Activated T-helper 2 cell treated with anti-CD3 and anti-CD28 coated beads, Interferon-gamma antibody, Interleukin-2, Interleukin-4, amounts not matched to agents 10 μg/mL and 5 μg/mL and 100 μg/mL, durations not matched to agents 14 hours and 24 hours and 36 hours (primary cell): ENCODE measurements at regions of chr11 and their contacts with region 1.

Region 1: DNA sequence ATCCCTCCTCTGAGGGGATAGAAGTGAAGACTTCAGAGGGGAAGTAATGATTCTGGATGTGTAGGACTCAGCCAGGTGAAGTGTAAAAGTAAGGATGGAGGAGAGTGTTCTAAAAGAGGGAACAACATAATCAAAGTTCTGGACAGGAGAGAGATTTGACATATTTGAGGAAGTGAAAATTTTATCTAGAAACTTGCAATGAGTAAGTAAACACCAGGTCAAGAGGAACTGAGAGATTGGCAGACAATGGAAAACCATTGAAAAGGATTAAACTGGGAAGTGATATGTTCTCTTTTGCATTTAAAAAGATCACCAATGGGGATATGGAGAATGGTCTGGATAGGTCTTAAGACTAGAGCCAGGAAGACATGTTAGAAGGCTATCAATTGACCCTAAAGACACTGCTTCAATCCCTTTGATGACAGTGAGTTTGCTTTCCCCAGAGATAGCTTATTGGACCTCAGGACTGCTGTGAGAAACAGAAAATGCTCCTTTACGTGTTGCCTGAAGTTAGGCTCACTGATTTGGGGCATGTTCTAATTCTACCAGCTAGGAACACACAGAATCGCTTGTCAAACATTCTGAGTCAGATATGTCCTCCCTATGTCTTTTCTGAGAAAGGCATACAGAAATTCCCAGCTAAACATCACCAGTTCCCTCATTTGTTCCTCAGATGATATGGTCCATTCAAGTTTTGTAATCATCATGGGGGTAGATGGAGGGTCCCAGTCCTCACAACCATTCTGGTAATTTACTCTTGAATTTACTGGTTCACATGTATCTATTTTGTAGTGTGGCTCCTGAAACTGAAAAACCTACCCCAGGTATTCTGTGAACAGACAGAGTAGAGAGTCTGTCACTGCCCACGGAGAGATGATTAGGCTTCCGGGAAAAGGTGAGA is 144.9 kb downstream of the MAML2 start:
- DNase-seq: no peak
- H3K4me3 Mint-ChIP-seq: no peak overlapping the region
- H3K27ac Mint-ChIP-seq: peak overlapping the region; percentile 68
- H3K4me1 Mint-ChIP-seq: peaks cover 63% of the 10 kb centered on the region
- H3K27me3 Mint-ChIP-seq: no peaks in the 10 kb centered on the region

Region 2: GRCh38 chr11:96215110-96215782 is 17.2 kb after region 1 on chr11:
- intact Hi-C with region 1: loop called (anchors 2 kb)
- DNase-seq: peak; percentile 17
- H3K4me3 Mint-ChIP-seq: peak overlapping the region; percentile 53
- H3K27ac Mint-ChIP-seq: peak overlapping the region; percentile 92
- H3K4me1 Mint-ChIP-seq: peaks cover 55% of the 10 kb centered on the region
- H3K27me3 Mint-ChIP-seq: no peaks in the 10 kb centered on the region